ENCODE measurements at regions of chr20 and their contacts with region 1.

Region 1: GRCh38 chr20:20237093-20237959 is 130.6 kb upstream of the INSM1 start:
- DNase-seq: peak in 1 of 2 donors; percentile 38
- ATAC-seq: peak; percentile 80

Region 2: GRCh38 chr20:20083807-20084206 is 153.5 kb before region 1 on chr20:
- intact Hi-C with region 1: loop called in 1 of 2 experiments (anchors 5 kb)
- DNase-seq: no peak
- ATAC-seq: peak; percentile 68